Right ventricle myocardium inferior (tissue), 1 donor: ENCODE measurements at regions of chr5 and their contacts with region 1.

Region 1: GRCh38 chr5:923281-923873 is 30.7 kb downstream of the TRIP13 start:
- DNase-seq: peak; percentile 91
- ATAC-seq: peak; percentile 89

Region 2: GRCh38 chr5:572398-573019 is 350.9 kb before region 1 on chr5:
- intact Hi-C with region 1: no loop called
- DNase-seq: no peak
- ATAC-seq: no peak

Region 3: DNA sequence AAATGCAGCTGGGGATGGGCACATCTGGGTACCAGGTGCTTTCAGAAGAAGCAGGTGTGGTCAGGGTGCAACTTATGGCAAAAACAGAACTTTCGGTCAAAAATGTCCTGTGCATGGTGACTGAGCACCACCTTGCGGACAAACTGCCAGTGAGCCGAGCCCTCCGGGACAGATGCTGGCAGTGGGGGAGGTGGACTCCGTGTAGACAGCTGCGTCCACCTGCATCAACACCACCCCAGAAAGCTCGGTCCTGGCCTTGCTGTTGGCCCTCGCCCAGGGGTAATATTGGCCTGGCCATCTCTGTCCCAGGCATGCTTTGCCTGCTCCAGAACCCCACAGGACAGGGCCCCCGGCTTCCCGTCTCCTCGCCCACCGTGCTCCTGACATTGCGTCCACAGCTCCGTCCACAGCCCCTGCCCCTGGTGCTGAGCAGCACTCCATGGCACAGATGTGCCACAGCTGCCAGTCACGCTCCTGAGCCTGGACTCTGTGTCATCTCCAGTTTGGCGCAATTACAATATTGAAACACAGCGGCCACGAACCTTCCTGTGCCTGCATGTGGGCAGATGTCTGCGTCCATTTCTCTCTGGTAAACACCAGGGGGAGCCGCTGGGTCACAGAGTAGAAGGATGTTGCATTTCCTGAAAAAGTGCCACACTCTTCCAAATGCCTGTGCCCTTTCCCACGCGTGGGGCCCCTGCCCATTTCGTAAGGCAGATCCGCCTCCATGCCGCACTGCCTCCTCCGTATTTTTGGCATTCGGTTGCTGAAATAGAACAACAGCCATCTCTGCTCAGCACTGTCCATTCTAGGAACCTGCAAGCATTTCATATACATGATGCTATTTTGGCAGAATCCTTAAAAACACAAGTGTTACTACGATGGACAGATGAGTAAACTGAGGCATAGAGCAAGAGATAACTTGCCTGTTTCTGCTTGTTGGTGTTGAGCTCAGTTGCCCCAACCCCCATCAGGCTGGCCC is 244.6 kb after region 1 on chr5:
- intact Hi-C with region 1: loop called (anchors 1 kb)
- DNase-seq: peak; percentile 85
- ATAC-seq: peak; percentile 81

Region 4: DNA sequence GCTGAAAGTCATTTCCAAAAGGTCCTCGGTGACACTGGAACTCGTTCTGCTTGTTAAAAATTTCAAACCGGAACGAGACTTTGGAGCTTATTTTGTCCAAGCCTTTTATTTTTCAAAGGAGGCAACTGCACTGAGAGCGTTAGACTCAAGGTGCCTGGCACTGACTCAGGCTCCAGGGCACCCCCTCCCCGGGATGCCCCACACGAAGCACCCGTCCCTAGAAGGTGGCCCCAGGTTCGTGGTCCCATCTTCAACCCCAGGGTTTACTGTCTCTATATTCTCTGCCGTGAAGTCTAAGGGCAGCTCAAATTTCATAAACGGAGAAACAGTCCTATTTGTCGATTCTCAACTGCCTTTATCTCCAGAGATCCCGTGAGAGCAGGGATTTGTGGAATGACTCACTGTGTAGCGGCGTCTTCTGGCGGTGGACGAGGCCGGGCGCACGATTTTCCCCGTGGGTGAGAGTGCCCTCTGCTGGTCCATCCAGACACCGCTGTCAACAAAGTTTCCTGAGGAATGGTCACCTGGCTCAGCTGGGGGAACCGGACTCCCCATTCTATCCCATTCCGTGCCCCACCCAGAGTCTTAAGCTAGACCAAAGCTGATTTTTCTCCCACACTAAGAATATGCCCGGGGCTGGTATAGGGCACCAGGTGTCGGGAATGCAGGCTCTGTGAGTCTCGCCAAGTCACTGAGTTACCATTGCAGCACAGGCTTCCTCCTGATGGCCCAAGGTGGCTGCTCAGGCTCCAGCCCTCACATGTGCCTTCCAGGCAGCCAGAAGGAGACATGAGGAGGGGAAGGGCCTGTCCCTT is 251.0 kb after region 1 on chr5:
- intact Hi-C with region 1: loop called (anchors 2 kb)
- DNase-seq: no peak
- ATAC-seq: peak; percentile 74